CD4-positive, alpha-beta memory T cell (primary cell): ENCODE measurements at regions of chr16 and their contacts with region 1.

Region 1: GRCh38 chr16:69565671-69566239 is at the start of gene NFAT5:
- DNase-seq: peak; percentile 82 to 99 (median 92)
- H3K4me3 ChIP-seq: peak within 1 kb of the TSS; percentile 92
- H3K4me3 Mint-ChIP-seq: peak within 1 kb of the TSS; percentile 92 to 99 (median 98)
- H3K27ac ChIP-seq: peak within 1 kb of the TSS; percentile 91
- H3K27ac Mint-ChIP-seq: peak within 1 kb of the TSS; percentile 94 to 99 (median 97)
- H3K4me1 ChIP-seq: peaks cover 43% of the 10 kb centered on the region
- H3K4me1 Mint-ChIP-seq: peaks cover 28 to 58% (median 37%) of the 10 kb centered on the region in 4 donors
- H3K27me3 ChIP-seq: no peaks in the 10 kb centered on the region
- H3K27me3 Mint-ChIP-seq: no peaks in the 10 kb centered on the region
- total RNA-seq, gene NFAT5: 29.2 to 35.6 TPM

Region 2: DNA sequence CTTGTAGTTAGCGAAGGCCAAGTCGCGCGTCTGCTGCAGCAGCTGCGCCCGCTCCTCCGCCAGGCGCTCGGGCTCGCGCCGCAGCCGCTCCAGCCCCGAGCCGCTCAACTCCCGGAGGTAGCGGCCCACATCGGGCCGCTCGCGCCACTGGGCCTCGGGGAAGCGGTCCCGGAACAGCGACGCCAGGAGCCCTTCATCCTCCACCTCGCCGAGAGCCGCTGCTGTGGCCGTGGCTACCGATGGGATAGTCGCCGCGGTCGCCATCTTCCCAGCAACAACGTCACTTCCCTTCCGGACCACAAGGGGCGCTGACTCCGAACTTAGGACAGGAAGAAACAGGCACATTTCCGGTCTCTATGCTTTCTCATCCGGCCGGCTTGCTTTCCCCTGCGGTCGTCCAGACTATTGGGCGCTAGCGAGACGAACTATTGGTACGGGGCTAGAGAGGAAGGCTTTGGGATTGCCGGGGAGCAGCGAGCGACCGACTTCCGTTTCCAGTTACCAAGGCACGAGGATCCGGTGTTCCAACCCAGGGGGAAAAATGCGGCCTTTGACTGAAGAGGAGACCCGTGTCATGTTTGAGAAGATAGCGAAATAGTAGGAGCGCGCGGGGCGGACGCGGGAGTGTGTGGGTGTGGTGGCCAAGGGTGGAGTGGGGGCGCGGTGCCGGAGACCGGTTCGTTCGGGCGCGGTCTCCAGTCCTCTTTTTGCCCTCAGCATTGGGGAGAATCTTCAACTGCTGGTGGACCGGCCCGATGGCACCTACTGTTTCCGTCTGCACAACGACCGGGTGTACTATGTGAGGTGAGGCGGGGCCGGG is 226.3 kb before region 1 on chr16 and contains the starts of genes COG8 and NIP7:
- CTCF ChIA-PET with region 1: no interaction called
- POLR2A ChIA-PET with region 1: interaction called, 3 read pairs
- intact Hi-C with region 1: loop called (anchors 1 kb)
- DNase-seq: peak; percentile 90 to 94 (median 91)
- H3K4me3 ChIP-seq: peak within 1 kb of the TSS; percentile 77 to 97
- H3K4me3 Mint-ChIP-seq: peak within 1 kb of the TSS; percentile 96 to 100 (median 100)
- H3K27ac ChIP-seq: peak within 1 kb of the TSS; percentile 81
- H3K27ac Mint-ChIP-seq: peak within 1 kb of the TSS; percentile 96 to 100 (median 99)
- H3K4me1 ChIP-seq: peaks cover 39% of the 10 kb centered on the region
- H3K4me1 Mint-ChIP-seq: peaks cover 34 to 74% (median 51%) of the 10 kb centered on the region in 4 donors
- H3K27me3 ChIP-seq: no peaks in the 10 kb centered on the region
- H3K27me3 Mint-ChIP-seq: no peaks in the 10 kb centered on the region
- total RNA-seq, gene COG8: 66.0 to 66.1 TPM
- total RNA-seq, gene NIP7: 30.9 to 31.9 TPM

Region 3: DNA sequence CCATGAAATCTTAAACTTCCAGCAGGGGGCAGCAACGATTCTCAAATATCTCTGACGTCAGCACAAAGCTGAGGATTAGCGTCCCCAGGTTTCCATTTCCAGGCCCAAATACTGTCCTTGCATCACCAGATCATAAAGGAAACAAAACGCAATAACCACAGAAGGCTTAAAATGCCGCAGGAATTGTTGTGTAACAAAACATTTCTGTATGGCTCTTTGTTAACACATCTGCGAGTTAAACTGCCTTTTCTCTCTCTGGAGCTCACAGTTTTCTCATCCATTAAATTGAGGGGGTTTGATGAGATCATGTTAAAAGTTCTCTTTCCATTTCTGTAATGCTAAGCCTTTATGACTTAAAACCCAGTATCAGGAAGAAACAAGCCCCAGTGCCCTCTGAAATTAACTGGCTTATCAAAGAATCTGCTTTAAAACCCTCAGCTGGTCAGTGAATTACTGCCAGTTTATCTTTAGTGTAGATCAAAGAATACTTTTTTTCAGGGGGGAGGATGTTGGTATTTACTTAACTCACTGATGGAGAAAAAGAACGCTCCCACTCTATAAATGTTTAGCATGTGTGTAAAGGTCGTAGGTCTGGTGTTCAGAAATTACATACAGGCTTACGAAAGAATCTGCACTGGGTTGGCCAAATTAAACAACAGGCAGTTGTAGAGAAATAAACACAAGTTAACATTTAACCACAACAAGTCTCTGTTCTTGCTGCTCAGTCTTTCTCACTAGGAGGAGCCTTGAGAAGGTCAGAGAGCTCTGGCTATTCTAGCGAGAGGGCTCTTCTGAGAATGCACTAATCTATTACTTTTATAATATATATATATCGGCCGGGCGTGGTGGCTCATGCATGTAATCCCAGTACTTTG is 169.3 kb before region 1 on chr16:
- CTCF ChIA-PET with region 1: interaction called, 23 read pairs
- POLR2A ChIA-PET with region 1: interaction called, 3 read pairs
- intact Hi-C with region 1: loop called (anchors 1 kb)
- DNase-seq: peak; percentile 65 to 76 (median 68)
- H3K4me3 ChIP-seq: no peak overlapping the region
- H3K4me3 Mint-ChIP-seq: peak overlapping the region in 1 of 8 donors; percentile 27
- H3K27ac ChIP-seq: peak overlapping the region; percentile 31
- H3K27ac Mint-ChIP-seq: peak overlapping the region in 6 of 7 donors; percentile 6 to 81 (median 24)
- H3K4me1 ChIP-seq: peaks cover 4% of the 10 kb centered on the region
- H3K4me1 Mint-ChIP-seq: peaks cover 0 to 6% (median 5%) of the 10 kb centered on the region in 4 donors
- H3K27me3 ChIP-seq: no peaks in the 10 kb centered on the region
- H3K27me3 Mint-ChIP-seq: peaks cover 0 to 3% of the 10 kb centered on the region in 2 donors

Region 4: DNA sequence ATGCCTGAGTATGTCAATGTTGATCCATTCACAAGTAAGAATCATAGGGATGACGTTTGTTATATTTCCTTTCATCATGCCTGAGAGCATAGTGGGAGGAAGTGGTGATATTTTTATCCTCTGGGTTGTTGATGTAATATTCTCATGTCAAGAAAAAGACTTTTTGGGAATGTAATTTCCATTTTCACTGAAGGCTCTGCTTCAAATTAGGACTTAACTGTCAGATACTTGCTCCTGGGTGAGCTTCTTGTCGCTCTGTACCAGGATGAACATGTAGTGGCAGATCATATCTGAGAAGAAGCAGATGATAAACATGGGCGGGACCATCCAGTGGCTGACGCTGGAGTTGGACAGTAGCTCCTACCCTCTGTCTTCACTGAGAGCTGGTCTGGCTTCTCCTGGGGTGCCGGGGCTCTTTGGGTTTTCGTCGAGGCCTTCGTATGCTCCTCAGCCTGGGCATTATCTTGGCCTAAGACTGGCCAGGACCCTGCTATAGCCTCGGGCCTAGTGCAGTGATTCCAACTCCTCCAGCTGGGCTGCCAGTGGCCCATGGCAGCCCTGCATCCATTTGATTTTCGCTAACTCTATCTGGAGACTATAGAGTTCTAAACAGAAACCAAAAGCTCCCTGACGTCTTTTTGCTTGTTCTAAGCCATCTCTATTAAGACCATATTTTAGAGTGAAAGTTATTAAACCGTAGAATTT is 121.7 kb before region 1 on chr16:
- CTCF ChIA-PET with region 1: interaction called, 3 read pairs
- POLR2A ChIA-PET with region 1: interaction called, 16 read pairs
- intact Hi-C with region 1: loop called (anchors 1 kb)
- DNase-seq: peak; percentile 31 to 66 (median 40)
- H3K4me3 ChIP-seq: peak overlapping the region; percentile 26 to 39
- H3K4me3 Mint-ChIP-seq: peak overlapping the region; percentile 83 to 91 (median 86)
- H3K27ac ChIP-seq: peak overlapping the region; percentile 70
- H3K27ac Mint-ChIP-seq: peak overlapping the region; percentile 94 to 99 (median 98)
- H3K4me1 ChIP-seq: peaks cover 26% of the 10 kb centered on the region
- H3K4me1 Mint-ChIP-seq: peaks cover 32 to 48% (median 41%) of the 10 kb centered on the region in 4 donors
- H3K27me3 ChIP-seq: no peaks in the 10 kb centered on the region
- H3K27me3 Mint-ChIP-seq: no peaks in the 10 kb centered on the region

Region 5: GRCh38 chr16:69535123-69536050 is 30.4 kb before region 1 on chr16:
- CTCF ChIA-PET with region 1: no interaction called
- POLR2A ChIA-PET with region 1: interaction called, 7 read pairs
- intact Hi-C with region 1: loop called (anchors 1 kb)
- DNase-seq: no peak
- H3K4me3 ChIP-seq: no peak overlapping the region
- H3K4me3 Mint-ChIP-seq: no peak overlapping the region
- H3K27ac ChIP-seq: no peak overlapping the region
- H3K27ac Mint-ChIP-seq: no peak overlapping the region
- H3K4me1 ChIP-seq: peaks cover 8% of the 10 kb centered on the region
- H3K4me1 Mint-ChIP-seq: peaks cover 4 to 11% (median 7%) of the 10 kb centered on the region in 4 donors
- H3K27me3 ChIP-seq: no peaks in the 10 kb centered on the region
- H3K27me3 Mint-ChIP-seq: peaks cover 0 to 3% of the 10 kb centered on the region in 2 donors

Region 6: DNA sequence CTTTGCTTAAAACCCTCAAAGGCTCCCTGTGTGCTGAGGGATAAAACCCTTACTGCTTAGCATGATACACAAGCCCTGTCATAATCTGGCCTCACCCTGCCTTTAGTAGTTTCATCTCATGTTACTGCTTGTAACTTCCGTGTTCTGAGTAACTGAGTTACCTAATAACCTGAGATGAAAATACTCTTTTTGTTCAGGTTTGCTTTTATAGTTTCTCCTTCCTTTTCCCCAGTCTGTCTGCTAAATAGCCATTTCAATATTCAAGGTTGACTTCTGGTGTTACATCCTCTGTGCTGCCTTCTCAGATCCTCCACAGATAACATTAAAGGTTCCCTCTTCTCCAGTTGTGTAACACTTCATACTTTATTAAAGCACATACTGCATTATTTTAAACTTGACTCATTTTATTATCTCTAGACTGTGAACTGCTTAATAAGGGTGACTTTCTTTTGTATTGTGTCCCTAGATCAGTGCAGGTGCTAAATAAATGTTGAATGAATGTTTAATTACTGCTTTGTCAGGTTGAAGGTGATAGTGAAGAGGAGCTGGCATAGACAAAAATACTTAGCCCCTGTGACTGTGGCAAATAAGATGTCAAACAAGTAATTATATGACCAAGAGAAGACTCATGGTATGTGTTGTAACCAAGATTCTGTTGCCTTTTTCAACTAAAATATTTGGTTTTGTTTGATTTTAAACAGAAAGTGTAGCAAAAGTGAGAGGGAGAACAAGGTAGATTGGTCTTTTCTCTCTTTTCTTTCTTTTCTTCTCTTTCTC is 47.8 kb after region 1 on chr16:
- CTCF ChIA-PET with region 1: no interaction called
- POLR2A ChIA-PET with region 1: no interaction called
- intact Hi-C with region 1: no loop called
- DNase-seq: no peak
- H3K4me3 ChIP-seq: no peak overlapping the region
- H3K4me3 Mint-ChIP-seq: no peak overlapping the region
- H3K27ac ChIP-seq: no peak overlapping the region
- H3K27ac Mint-ChIP-seq: peak overlapping the region in 6 of 7 donors; percentile 9 to 70 (median 30)
- H3K4me1 ChIP-seq: peaks cover 27% of the 10 kb centered on the region
- H3K4me1 Mint-ChIP-seq: peaks cover 42 to 68% (median 59%) of the 10 kb centered on the region in 4 donors
- H3K27me3 ChIP-seq: no peaks in the 10 kb centered on the region
- H3K27me3 Mint-ChIP-seq: no peaks in the 10 kb centered on the region